ENCODE measurements at regions of chr1 and their contacts with region 1.

Region 1: GRCh38 chr1:212665241-212666115 is 34.2 kb downstream of the BATF3 start:
- DNase-seq: peak; percentile 56 to 87 (median 72)
- ATAC-seq: peak; percentile 96
- H3K4me3 ChIP-seq: peak overlapping the region; percentile 40
- H3K4me3 Mint-ChIP-seq: peak overlapping the region; percentile 81
- H3K27ac ChIP-seq: no peak overlapping the region
- H3K27ac Mint-ChIP-seq: no peak overlapping the region
- H3K4me1 ChIP-seq: peaks cover 9% of the 10 kb centered on the region
- H3K4me1 Mint-ChIP-seq: no peaks in the 10 kb centered on the region
- H3K27me3 ChIP-seq: no peaks in the 10 kb centered on the region
- H3K27me3 Mint-ChIP-seq: peaks cover 11% of the 10 kb centered on the region
- CTCF ChIP-seq: peak; percentile 90

Region 2: DNA sequence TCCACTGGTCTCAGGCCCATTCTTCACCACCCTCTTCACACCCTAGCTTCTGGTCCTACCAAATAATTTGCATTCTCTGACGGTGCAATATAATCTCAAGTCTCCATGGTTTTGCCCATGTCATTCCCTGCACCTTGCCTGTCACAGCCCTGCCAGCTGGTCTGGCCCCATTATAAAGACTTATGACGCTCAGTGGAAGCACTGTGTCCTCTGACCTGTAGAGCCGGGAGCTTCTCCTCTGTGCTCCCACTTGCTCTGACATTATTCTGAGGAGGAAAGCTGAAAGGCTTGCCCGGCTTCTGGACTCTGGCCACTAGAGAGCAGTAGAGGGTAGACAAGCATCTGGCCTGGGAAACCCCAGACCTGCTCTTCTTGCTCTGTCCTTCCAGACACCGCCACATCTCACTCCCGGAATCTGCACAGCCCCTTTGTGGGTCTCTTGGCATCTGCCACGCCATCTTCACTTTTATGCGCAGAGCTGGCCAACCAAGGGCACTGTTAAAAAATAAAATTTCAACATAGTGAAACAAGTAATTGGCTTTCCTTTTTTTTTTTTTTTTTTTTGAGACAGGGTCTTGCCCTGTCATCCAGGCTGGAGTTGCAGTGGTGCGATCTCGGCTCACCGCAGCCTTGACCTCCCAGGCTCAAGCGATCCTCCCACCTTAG is 188.3 kb before region 1 on chr1:
- CTCF ChIA-PET with region 1: interaction called, 17 read pairs
- POLR2A ChIA-PET with region 1: no interaction called
- intact Hi-C with region 1: no loop called
- DNase-seq: peak; percentile 57 to 88 (median 63)
- ATAC-seq: peak; percentile 99
- H3K4me3 ChIP-seq: no peak overlapping the region
- H3K4me3 Mint-ChIP-seq: peak overlapping the region; percentile 51
- H3K27ac ChIP-seq: no peak overlapping the region
- H3K27ac Mint-ChIP-seq: no peak overlapping the region
- H3K4me1 ChIP-seq: peaks cover 13% of the 10 kb centered on the region
- H3K4me1 Mint-ChIP-seq: peaks cover 6% of the 10 kb centered on the region
- H3K27me3 ChIP-seq: no peaks in the 10 kb centered on the region
- H3K27me3 Mint-ChIP-seq: peaks cover 12% of the 10 kb centered on the region
- CTCF ChIP-seq: peak; percentile 86

Region 3: GRCh38 chr1:212699104-212699624 is 33.7 kb after region 1 on chr1:
- CTCF ChIA-PET with region 1: interaction called, 10 read pairs
- POLR2A ChIA-PET with region 1: no interaction called
- intact Hi-C with region 1: no loop called
- DNase-seq: peak in 13 of 14 experiments; percentile 21 to 79 (median 30)
- ATAC-seq: peak; percentile 60
- H3K4me3 ChIP-seq: peak overlapping the region; percentile 62
- H3K4me3 Mint-ChIP-seq: peak overlapping the region; percentile 92
- H3K27ac ChIP-seq: no peak overlapping the region
- H3K27ac Mint-ChIP-seq: no peak overlapping the region
- H3K4me1 ChIP-seq: peaks cover 34% of the 10 kb centered on the region
- H3K4me1 Mint-ChIP-seq: peaks cover 50% of the 10 kb centered on the region
- H3K27me3 ChIP-seq: no peaks in the 10 kb centered on the region
- H3K27me3 Mint-ChIP-seq: no peaks in the 10 kb centered on the region
- CTCF ChIP-seq: peak; percentile 64

Region 4: GRCh38 chr1:212774584-212774983 is 109.1 kb after region 1 on chr1:
- CTCF ChIA-PET with region 1: interaction called, 21 read pairs
- POLR2A ChIA-PET with region 1: interaction called, 3 read pairs
- intact Hi-C with region 1: no loop called
- DNase-seq: peak in 1 of 14 experiments; percentile 18
- ATAC-seq: no peak
- H3K4me3 ChIP-seq: no peak overlapping the region
- H3K4me3 Mint-ChIP-seq: no peak overlapping the region
- H3K27ac ChIP-seq: no peak overlapping the region
- H3K27ac Mint-ChIP-seq: no peak overlapping the region
- H3K4me1 ChIP-seq: no peaks in the 10 kb centered on the region
- H3K4me1 Mint-ChIP-seq: peaks cover 28% of the 10 kb centered on the region
- H3K27me3 ChIP-seq: no peaks in the 10 kb centered on the region
- H3K27me3 Mint-ChIP-seq: no peaks in the 10 kb centered on the region
- CTCF ChIP-seq: no peak

Region 5: DNA sequence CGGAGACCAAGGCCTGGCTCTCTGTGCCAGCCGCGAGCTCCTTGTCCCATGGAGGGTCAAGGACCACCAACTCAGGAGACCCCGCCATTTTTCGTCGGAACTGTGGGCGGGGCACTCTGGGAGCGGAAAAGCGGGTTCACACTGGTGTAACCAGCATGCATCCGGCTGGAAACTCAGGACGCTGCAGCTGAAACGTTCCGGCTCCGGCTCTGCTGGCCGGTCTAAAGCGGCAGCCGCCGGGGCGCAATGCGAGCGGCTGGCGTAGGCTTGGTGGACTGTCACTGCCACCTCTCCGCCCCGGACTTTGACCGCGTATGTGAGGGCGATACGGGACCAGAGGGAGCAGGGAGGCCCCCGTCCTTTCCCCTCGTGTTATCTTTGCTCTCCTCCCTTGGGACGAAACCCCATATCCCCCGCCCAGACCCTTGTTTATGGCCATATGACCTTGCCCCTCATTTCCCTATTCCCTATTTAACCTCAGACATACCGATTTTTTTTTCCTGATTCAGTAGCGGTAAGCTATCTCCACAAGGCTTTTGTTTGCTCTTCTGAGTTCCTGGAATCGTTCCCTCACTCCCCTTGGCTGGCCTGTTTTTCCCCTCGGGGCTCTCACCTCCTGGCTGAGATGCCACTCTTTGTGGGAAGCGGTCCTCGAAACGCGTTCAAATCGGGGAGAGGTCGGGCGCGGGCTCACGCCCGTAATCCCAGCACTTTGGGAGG is 126.4 kb after region 1 on chr1 and contains the starts of genes NSL1 and TATDN3:
- CTCF ChIA-PET with region 1: interaction called, 11 read pairs
- POLR2A ChIA-PET with region 1: interaction called, 3 read pairs
- intact Hi-C with region 1: no loop called
- DNase-seq: peak; percentile 84 to 98 (median 94)
- ATAC-seq: peak; percentile 87
- H3K4me3 ChIP-seq: peak within 1 kb of the TSS; percentile 71
- H3K4me3 Mint-ChIP-seq: peak within 1 kb of the TSS; percentile 96
- H3K27ac ChIP-seq: peak within 1 kb of the TSS; percentile 73 to 77
- H3K27ac Mint-ChIP-seq: peak within 1 kb of the TSS; percentile 90
- H3K4me1 ChIP-seq: peaks cover 31% of the 10 kb centered on the region
- H3K4me1 Mint-ChIP-seq: peaks cover 41% of the 10 kb centered on the region
- H3K27me3 ChIP-seq: no peaks in the 10 kb centered on the region
- H3K27me3 Mint-ChIP-seq: peaks cover 4% of the 10 kb centered on the region
- CTCF ChIP-seq: no peak
- total RNA-seq, gene NSL1: 14.1 to 15.7 TPM
- total RNA-seq, gene TATDN3: 12.2 to 13.8 TPM

Region 6: GRCh38 chr1:212994926-212995325 is 329.4 kb after region 1 on chr1:
- CTCF ChIA-PET with region 1: interaction called, 6 read pairs
- POLR2A ChIA-PET with region 1: interaction called, 4 read pairs
- intact Hi-C with region 1: loop called (anchors 1 to 2 kb)
- DNase-seq: no peak
- ATAC-seq: no peak
- H3K4me3 ChIP-seq: no peak overlapping the region
- H3K4me3 Mint-ChIP-seq: no peak overlapping the region
- H3K27ac ChIP-seq: no peak overlapping the region
- H3K27ac Mint-ChIP-seq: no peak overlapping the region
- H3K4me1 ChIP-seq: no peaks in the 10 kb centered on the region
- H3K4me1 Mint-ChIP-seq: peaks cover 8% of the 10 kb centered on the region
- H3K27me3 ChIP-seq: no peaks in the 10 kb centered on the region
- H3K27me3 Mint-ChIP-seq: no peaks in the 10 kb centered on the region
- CTCF ChIP-seq: no peak

Measured in CD4-positive, alpha-beta T cell (primary cell).